ENCODE measurements at regions of chr15 and their contacts with region 1.

Region 1: DNA sequence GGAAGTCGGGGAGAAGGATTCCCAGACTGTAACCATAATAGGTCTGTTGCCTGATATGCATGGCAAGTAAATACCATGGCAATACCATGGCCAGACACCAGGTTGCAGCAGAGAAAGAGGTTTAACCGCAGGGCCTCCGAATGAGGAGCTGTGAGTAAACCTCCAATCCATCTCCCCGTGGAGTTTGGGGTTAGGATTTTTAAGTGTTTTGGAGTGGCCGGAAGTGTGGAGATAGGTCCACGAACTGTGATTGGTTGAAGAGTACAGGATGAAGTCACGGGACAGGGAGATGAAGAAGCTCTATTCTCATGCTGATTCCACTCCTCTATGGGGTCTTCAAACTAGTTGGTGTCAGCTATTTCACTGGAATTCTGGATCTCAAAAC is 127.9 kb downstream of the ST8SIA2 start:
- DNase-seq: peak; percentile 75
- ATAC-seq: peak; percentile 94
- H3K4me3 Mint-ChIP-seq: no peak overlapping the region
- H3K27ac Mint-ChIP-seq: no peak overlapping the region; the same call in 1 of the 2 replicates
- H3K4me1 Mint-ChIP-seq: peaks cover 29% of the 10 kb centered on the region
- H3K27me3 Mint-ChIP-seq: no peaks in the 10 kb centered on the region
- CTCF ChIP-seq: peak; percentile 44; the same call in 1 of the 2 replicates

Region 2: DNA sequence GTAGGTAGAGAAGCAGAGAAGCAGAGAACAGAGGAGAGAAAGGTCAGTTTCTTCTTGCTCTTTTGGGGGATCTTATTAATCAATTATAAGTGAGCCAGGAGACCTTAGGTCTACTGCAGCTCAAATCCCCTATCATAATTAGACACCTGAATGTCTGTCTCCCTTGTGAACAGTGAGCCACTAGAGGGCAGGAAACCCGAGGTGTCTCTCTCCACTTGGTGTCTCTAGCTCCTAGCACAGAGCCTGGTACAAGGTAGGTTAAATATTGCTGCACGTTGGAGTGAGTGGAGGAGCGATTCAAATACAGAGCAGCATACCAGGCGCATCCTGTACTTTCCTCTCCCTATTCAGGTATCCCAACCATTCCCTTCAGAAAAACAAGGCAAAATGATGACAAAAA is 130.0 kb before region 1 on chr15:
- CTCF ChIA-PET with region 1: interaction called, 15 read pairs
- POLR2A ChIA-PET with region 1: no interaction called
- DNase-seq: peak; percentile 59
- ATAC-seq: peak; percentile 33
- H3K4me3 Mint-ChIP-seq: peak overlapping the region; percentile 80
- H3K27ac Mint-ChIP-seq: no peak overlapping the region
- H3K4me1 Mint-ChIP-seq: peaks cover 27% of the 10 kb centered on the region
- H3K27me3 Mint-ChIP-seq: peaks cover 67% of the 10 kb centered on the region
- CTCF ChIP-seq: 0 out of 2 replicates have a peak, but pooled peaks have one; percentile 26

Region 3: GRCh38 chr15:92510163-92510882 is 11.3 kb before region 1 on chr15:
- CTCF ChIA-PET with region 1: interaction called, 13 read pairs
- POLR2A ChIA-PET with region 1: no interaction called
- DNase-seq: no peak
- ATAC-seq: peak; percentile 99
- H3K4me3 Mint-ChIP-seq: no peak overlapping the region
- H3K27ac Mint-ChIP-seq: peak overlapping the region; percentile 86
- H3K4me1 Mint-ChIP-seq: peaks cover 19% of the 10 kb centered on the region
- H3K27me3 Mint-ChIP-seq: peaks cover 14% of the 10 kb centered on the region
- CTCF ChIP-seq: no peak

Region 4: DNA sequence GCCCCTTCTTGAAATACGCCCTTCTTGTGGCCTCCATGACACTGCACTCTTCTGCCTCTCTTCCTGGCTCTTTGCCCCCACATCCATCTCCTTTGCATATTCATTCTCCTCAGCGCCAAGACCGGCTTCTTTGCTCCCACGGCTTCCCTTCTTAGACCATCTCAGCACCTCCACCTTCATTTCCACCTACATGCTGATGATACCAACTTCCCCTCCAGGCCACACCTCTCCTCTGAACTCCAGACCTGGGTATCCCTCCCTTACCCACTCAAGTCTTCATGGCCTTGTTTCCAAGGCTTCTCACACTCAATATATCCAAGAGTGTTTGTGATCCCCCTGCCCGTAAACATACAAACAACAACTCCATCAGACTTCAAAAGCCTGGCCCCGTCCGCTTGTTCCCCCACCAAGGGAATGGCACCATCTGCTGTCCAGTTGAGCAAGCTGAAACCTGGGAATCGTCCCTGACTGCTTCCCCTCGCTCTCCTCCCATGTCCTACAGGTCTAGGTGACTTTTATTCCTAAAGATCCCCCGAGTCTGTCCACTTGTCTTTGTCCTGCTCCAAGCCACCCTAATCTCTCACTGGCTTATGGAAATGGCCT is 161.7 kb after region 1 on chr15:
- CTCF ChIA-PET with region 1: interaction called, 27 read pairs
- POLR2A ChIA-PET with region 1: no interaction called
- DNase-seq: peak; percentile 66
- ATAC-seq: peak; percentile 94
- H3K4me3 Mint-ChIP-seq: no peak overlapping the region
- H3K27ac Mint-ChIP-seq: no peak overlapping the region
- H3K4me1 Mint-ChIP-seq: peaks cover 8% of the 10 kb centered on the region
- H3K27me3 Mint-ChIP-seq: no peaks in the 10 kb centered on the region
- CTCF ChIP-seq: 0 out of 2 replicates have a peak, but pooled peaks have one; percentile 25

Region 5: GRCh38 chr15:92709110-92709790 is 187.6 kb after region 1 on chr15:
- CTCF ChIA-PET with region 1: interaction called, 35 read pairs
- POLR2A ChIA-PET with region 1: no interaction called
- DNase-seq: no peak
- ATAC-seq: no peak
- H3K4me3 Mint-ChIP-seq: no peak overlapping the region
- H3K27ac Mint-ChIP-seq: no peak overlapping the region
- H3K4me1 Mint-ChIP-seq: peaks cover 20% of the 10 kb centered on the region
- H3K27me3 Mint-ChIP-seq: peaks cover 45% of the 10 kb centered on the region
- CTCF ChIP-seq: no peak

Region 6: GRCh38 chr15:92714477-92715401 is 193.1 kb after region 1 on chr15:
- CTCF ChIA-PET with region 1: interaction called, 35 read pairs
- POLR2A ChIA-PET with region 1: no interaction called
- DNase-seq: peak; percentile 82
- ATAC-seq: peak; percentile 66
- H3K4me3 Mint-ChIP-seq: peak overlapping the region; percentile 73
- H3K27ac Mint-ChIP-seq: no peak overlapping the region
- H3K4me1 Mint-ChIP-seq: peaks cover 18% of the 10 kb centered on the region
- H3K27me3 Mint-ChIP-seq: peaks cover 45% of the 10 kb centered on the region
- CTCF ChIP-seq: peak; percentile 77